Activated CD4-positive, alpha-beta T cell treated with anti-CD3 and anti-CD28 coated beads, Interleukin-2, amount 10 ng/mL, durations not matched to agents 24 days and 14 days (primary cell): ENCODE measurements at regions of chr3 and their contacts with region 1.

Region 1: GRCh38 chr3:153285194-153285641 is 123.2 kb downstream of the RAP2B start:
- DNase-seq: no peak
- H3K4me3 Mint-ChIP-seq: no peak overlapping the region
- H3K27ac Mint-ChIP-seq: no peak overlapping the region
- H3K4me1 Mint-ChIP-seq: peaks cover 36% of the 10 kb centered on the region
- H3K27me3 Mint-ChIP-seq: no peaks in the 10 kb centered on the region

Region 2: DNA sequence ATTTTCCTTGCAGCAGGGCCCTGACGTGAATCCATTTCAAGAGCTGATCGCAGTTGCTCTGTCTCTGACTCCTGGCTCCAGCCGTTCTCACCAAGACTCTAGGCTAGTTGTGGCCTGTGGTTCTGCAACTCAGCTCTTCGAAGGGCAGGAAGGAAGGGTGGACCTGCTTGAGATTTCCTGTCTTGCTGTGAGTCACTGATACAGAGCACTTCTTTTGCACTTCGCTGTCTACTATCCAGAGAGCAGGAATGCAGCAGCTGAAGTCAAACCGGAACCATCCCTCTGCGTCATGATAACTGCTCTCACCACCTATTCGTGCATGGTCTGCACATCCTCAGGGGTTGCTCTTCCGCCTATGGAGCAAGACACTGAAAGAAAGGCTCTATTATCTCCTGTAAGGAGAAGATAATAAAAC is 63.5 kb before region 1 on chr3:
- intact Hi-C with region 1: loop called (anchors 5 kb)
- DNase-seq: peak; percentile 93
- H3K4me3 Mint-ChIP-seq: peak overlapping the region; percentile 73
- H3K27ac Mint-ChIP-seq: peak overlapping the region; percentile 97
- H3K4me1 Mint-ChIP-seq: peaks cover 46% of the 10 kb centered on the region
- H3K27me3 Mint-ChIP-seq: no peaks in the 10 kb centered on the region

Region 3: DNA sequence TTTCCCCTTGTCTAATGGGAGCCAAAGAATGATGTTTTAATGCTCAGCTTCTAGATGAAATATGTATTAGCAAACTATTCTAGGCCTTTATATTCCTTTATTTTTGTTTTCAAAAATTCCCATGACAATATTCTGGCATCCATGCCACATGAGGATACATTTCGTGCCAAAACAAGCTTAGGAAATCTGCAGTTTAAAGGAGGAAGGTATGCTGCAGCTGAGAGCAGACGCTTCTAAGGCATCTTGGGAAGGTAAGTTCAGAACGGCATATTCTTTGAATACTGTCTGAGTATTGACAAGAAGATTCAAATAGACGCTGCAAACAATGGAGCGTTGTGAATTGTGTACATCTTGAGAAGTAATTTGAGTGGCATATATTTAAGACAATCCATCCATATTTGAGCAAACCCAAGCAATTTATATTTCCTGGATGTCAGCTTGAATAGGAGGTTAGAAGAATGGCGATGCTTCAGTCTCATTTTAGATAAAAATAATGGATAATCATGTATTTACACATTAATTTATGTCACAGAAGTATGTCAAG is 35.4 kb after region 1 on chr3:
- intact Hi-C with region 1: no loop called
- DNase-seq: no peak
- H3K4me3 Mint-ChIP-seq: no peak overlapping the region
- H3K27ac Mint-ChIP-seq: no peak overlapping the region
- H3K4me1 Mint-ChIP-seq: peaks cover 17% of the 10 kb centered on the region
- H3K27me3 Mint-ChIP-seq: no peaks in the 10 kb centered on the region

Region 4: DNA sequence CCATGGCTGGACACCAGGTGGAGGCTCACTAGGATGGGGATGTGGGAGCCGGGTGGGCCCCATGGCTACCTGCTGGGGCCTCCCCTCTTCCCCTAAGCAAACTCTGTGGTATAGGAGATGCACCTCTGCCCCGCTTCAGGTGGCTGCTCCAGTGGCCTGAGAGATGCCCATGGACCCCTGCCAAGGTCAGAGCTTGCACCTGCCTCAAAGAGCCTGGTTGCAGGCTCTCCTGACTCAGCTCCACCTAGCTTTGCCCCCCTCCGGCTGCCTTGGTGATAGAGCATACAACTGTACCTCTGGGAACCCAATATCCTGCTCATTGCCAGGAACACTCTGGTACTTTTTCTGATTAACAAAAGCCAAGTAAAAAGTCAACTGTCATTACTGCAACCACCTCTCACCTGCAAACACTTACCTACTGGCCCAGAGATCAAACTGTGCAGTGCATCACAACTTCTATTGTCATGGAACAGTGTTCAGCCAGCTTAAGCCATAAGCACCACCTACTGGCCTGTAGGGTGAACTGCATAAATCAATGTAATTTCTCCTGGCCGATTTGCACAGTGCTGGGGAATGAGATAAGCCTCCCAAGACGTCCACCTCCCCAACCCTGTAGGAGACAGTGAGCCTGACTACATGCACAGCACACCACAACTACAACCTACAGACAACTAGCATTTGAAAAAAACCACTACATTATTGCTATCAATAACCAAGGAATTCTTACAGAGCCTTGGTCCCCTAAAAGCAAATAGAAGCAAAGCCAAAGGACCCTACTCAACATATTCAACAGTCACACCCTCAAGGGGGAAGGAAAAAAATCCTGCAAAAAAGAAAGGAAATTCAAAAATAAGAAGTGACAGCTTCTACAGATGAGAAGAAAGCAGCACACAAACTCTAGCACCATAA is 483.6 kb after region 1 on chr3:
- intact Hi-C with region 1: loop called (anchors 5 kb)
- DNase-seq: peak; percentile 84
- H3K4me3 Mint-ChIP-seq: no peak overlapping the region
- H3K27ac Mint-ChIP-seq: no peak overlapping the region
- H3K4me1 Mint-ChIP-seq: peaks cover 4% of the 10 kb centered on the region
- H3K27me3 Mint-ChIP-seq: peaks cover 19% of the 10 kb centered on the region